A673 (cell line): ENCODE measurements at regions of chr6 and their contacts with region 1.

Region 1: DNA sequence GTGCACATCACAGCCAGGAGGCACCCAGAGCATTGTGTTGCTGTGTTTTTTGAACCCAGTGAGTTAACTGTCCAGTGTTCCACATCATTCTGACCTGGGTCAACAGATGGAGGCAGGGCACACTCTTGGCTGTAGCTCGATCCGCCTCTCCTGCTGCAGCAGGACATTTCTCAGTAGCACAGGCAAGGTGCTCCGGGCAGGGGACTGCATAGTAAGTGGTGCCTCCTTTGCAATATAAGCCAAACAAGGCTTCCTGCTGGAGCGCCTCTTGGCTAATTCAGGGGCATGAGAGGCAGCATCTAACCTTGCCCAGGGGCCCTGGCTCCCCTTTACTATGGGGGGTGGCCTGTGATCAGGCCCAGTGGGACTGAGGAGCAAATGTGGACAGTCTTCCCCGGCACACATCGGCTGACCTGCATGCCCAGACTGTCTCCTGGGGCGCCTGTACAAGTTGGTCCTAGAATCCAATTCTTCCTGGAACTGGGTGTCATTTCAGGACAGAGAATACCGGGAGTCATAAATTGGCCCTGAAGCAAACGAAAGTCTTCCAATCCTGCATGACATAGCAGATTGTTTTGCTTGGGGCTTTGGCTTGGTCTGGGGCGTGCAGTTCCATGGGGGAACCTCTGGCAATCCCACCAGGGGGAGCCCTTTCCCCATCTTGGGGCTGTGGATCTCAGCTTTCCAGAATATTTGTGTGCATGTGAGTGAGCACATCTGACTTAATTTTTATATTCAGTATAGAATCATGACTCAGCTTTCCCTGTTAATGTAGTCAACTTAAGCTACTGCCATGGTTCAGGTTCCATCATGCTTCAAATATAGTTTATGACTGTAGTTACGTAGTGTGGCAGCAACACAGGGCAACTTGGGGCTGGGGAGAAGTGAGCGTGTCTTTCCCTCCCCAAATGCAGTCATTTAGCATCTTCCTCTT is 56.0 kb upstream of the DDR1 start:
- DNase-seq: peak; percentile 90
- H3K4me3 ChIP-seq: no peak overlapping the region
- H3K27ac ChIP-seq: peak overlapping the region; percentile 40
- H3K4me1 ChIP-seq: peaks cover 5% of the 10 kb centered on the region
- H3K27me3 ChIP-seq: no peaks in the 10 kb centered on the region
- CTCF ChIP-seq: peak; percentile 96

Region 2: GRCh38 chr6:30489081-30490025 is 338.9 kb before region 1 on chr6 and contains the start of gene HLA-E:
- CTCF ChIA-PET with region 1: no interaction called
- POLR2A ChIA-PET with region 1: no interaction called
- intact Hi-C with region 1: no loop called
- DNase-seq: peak; percentile 99
- H3K4me3 ChIP-seq: peak within 1 kb of the TSS; percentile 83
- H3K27ac ChIP-seq: peak within 1 kb of the TSS; percentile 81
- H3K4me1 ChIP-seq: peaks cover 8% of the 10 kb centered on the region
- H3K27me3 ChIP-seq: no peaks in the 10 kb centered on the region
- CTCF ChIP-seq: no peak
- total RNA-seq, gene HLA-E: 36.9 and 41.1 TPM in 2 replicates

Region 3: DNA sequence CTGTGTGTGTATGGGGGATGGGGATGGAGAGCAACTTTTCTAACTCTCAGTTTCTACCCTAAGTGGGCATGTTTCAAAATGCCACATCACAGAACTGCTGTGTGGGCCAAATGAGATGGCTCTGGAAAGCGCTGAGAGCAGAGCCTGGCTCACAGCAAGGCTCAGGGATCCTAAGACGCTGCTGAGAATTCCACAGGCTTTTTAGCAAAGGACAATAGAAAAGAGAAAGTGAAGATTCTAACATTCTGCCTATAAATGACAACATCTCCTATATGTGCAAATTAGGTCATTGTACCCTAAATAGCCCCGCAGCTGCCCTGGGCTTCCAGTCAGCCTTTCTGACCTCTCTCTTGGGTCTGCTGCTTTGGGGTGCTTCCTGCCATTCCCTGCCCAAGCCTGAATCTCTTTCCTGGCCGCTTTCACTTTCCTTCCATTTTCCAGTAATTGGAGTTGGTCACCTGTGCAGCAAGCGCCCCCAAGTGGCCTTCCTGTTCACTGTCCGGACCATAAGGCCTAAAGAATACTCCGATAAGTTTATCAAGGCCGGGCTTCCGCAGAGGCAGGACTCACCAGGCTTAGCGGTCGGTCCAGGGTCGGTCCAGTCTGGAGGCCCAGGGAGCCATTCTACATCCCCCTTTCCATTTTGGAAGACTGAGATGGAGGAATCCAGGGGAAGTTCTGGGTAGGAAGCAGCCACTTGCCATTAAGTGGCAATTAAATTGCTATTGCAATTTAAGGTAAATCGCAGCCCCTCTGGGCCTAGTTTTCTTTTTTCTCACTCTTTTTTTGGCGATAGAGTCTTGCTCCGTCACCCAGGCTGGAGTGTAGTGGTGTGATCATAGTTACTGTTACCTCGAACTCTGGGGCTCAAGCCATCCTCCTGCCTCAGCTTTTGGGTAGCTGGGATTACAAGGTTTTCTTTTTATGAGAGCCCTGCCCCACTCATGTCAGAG is 49.4 kb after region 1 on chr6:
- CTCF ChIA-PET with region 1: no interaction called
- POLR2A ChIA-PET with region 1: no interaction called
- intact Hi-C with region 1: loop called (anchors 1 kb)
- DNase-seq: peak; percentile 88
- H3K4me3 ChIP-seq: peak overlapping the region; percentile 31
- H3K27ac ChIP-seq: no peak overlapping the region
- H3K4me1 ChIP-seq: peaks cover 3% of the 10 kb centered on the region
- H3K27me3 ChIP-seq: no peaks in the 10 kb centered on the region
- CTCF ChIP-seq: peak; percentile 93